Heart left ventricle (tissue), 16 donors: ENCODE measurements at regions of chr19 and their contacts with region 1.

Region 1: GRCh38 chr19:39532233-39533002 is at the start of gene EID2B:
- DNase-seq: peak; percentile 95 to 98 (median 97)
- ATAC-seq: peak; percentile 93 to 99 (median 98)
- H3K4me3 ChIP-seq: peak within 1 kb of the TSS; percentile 58 to 98 (median 80)
- H3K27ac ChIP-seq: peak within 1 kb of the TSS; percentile 45 to 92 (median 82)
- H3K4me1 ChIP-seq: peaks cover 0 to 22% (median 13%) of the 10 kb centered on the region in 12 donors
- H3K27me3 ChIP-seq: no peaks in the 10 kb centered on the region
- CTCF ChIP-seq: peak; percentile 96 to 99 (median 98)
- POLR2A ChIP-seq: peak in 1 of 2 donors; percentile 78
- total RNA-seq, gene EID2B: 1.1 to 5.1 (median 2.9) TPM

Region 2: DNA sequence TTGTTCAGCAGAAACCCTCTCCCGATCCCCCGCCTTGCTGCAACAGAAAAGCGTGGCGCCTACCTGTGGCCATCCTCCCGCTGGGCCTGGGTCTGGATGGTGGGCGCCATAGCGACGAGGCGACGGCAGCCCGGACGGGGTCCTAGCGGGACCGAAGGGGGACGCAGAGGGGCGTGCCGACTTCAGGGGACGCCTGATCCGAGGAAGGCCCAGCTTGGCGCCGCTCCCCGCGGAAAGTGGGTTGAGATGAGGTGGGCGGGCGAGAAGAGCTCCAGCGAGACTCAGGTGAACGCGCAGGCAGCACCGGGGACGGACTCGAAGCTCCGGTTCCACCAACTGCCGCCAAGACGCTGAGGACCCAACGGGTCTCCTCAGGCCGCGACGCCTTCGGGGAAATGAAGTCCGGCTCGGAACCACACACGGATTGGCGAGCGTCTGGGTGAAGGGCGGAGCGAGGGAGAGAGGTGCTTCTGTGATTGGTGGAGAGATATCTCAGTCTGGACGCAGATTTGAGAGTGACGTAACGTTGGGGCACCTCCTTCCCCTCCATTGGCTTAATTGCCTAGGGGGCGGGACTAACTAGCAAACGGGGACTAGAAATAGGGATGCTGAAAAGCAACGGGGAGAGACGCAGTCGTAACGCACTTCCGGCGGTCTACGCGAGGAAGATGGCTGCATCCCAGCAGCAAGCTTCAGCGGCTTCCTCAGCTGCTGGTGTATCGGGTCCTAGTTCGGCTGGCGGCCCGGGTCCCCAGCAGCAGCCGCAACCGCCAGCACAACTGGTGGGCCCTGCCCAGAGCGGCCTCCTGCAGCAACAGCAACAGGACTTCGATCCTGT is 141.4 kb before region 1 on chr19 and contains the starts of genes MED29 and PAF1:
- intact Hi-C with region 1: loop called in 5 of 10 experiments (anchors 2 to 10 kb)
- DNase-seq: peak; percentile 97 to 99 (median 98)
- ATAC-seq: peak; percentile 95 to 99 (median 96)
- H3K4me3 ChIP-seq: peak within 1 kb of the TSS; percentile 74 to 99 (median 94)
- H3K27ac ChIP-seq: peak within 1 kb of the TSS; percentile 94 to 100 (median 98)
- H3K4me1 ChIP-seq: peaks cover 3 to 25% (median 19%) of the 10 kb centered on the region in 12 donors
- H3K27me3 ChIP-seq: no peaks in the 10 kb centered on the region
- CTCF ChIP-seq: peak in 1 of 12 donors; percentile 26
- POLR2A ChIP-seq: peak; percentile 49 to 89
- total RNA-seq, gene MED29: 26.3 to 53.0 (median 34.1) TPM
- total RNA-seq, gene PAF1: 32.8 to 75.7 (median 40.7) TPM

Region 3: DNA sequence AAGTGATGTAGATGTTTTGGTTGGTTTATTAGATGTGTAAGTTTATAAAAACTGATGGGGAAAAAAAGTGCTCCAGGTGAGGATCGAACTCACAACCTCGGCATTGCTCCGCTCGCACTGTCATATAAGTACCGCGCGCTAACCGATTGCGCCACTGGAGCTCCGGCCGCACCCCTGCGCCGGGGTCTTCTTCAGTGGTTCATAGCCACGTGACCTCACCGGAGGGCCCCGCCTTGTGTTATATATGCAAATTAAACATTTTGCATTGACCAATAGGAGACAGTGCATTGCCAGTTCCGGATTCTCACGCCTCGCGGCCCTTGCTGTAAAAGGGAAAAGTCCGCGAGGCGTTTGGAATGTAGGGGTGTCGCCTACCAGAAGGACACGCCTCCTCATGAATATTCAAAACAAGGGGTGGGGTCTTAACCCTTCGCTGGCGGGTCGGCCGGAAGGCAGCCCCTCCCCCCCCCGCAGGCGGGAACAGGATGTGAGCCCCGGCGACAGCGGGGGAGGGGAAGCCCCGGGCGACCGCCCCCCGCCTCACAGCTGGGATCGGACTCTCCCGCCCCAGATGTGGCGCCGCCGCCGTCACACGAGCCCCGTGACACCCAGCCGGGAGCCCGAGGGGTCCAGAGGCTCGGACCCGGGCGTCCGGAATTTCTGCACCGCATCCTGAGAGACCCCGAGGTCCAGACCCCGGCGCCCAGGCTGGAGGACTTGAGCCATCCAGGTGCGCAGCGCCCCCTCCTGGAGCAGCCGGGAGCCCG is 120.1 kb before region 1 on chr19 and contains the start of gene PLEKHG2:
- intact Hi-C with region 1: loop called in 1 of 10 experiments (anchors 10 kb)
- DNase-seq: peak; percentile 97 to 98 (median 97)
- ATAC-seq: peak; percentile 65 to 72 (median 71)
- H3K4me3 ChIP-seq: peak within 1 kb of the TSS; percentile 61 to 100 (median 85)
- H3K27ac ChIP-seq: peak within 1 kb of the TSS; percentile 94 to 100 (median 99)
- H3K4me1 ChIP-seq: peaks cover 7 to 65% (median 37%) of the 10 kb centered on the region in 12 donors
- H3K27me3 ChIP-seq: peaks cover 0 to 5% (median 0%) of the 10 kb centered on the region in 9 donors
- CTCF ChIP-seq: peak; percentile 75 to 98 (median 89)
- POLR2A ChIP-seq: peak in 1 of 2 donors; percentile 80
- total RNA-seq, gene PLEKHG2: 9.2 to 38.5 (median 14.6) TPM

Region 4: DNA sequence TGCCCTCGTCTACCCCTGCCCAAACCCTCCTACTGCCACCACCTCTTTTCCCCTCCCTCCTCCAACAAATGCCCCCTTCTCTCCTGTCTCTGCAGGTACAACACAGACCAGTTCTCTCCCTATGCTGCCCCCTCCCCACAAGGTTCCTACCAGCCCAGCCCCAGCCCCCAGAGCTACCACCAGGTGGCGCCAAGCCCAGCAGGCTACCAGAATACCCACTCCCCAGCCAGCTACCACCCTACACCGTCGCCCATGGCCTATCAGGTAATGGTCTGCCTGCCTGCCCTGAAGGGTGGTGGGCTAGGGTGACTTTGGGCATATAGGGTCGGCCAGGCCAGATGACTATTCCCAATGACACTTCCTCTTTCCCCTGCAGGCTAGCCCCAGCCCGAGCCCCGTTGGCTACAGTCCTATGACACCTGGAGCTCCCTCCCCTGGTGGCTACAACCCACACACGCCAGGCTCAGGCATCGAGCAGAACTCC is 58.2 kb before region 1 on chr19:
- intact Hi-C with region 1: loop called (anchors 1 to 10 kb)
- DNase-seq: peak; percentile 44 to 77 (median 49)
- ATAC-seq: peak; percentile 34 to 71 (median 56)
- H3K4me3 ChIP-seq: no peak overlapping the region
- H3K27ac ChIP-seq: no peak overlapping the region
- H3K4me1 ChIP-seq: peaks cover 0 to 7% (median 0%) of the 10 kb centered on the region in 12 donors
- H3K27me3 ChIP-seq: no peaks in the 10 kb centered on the region
- CTCF ChIP-seq: peak; percentile 55 to 81 (median 75)
- POLR2A ChIP-seq: no peak

Region 5: GRCh38 chr19:39514840-39515550 is 17.4 kb before region 1 on chr19 and contains the start of gene SELENOV:
- intact Hi-C with region 1: no loop called
- DNase-seq: no peak
- ATAC-seq: peak in 2 of 4 donors; percentile 24 to 28
- H3K4me3 ChIP-seq: peak within 1 kb of the TSS; percentile 4 to 48 (median 32)
- H3K27ac ChIP-seq: no peak within 1 kb of the TSS
- H3K4me1 ChIP-seq: peaks cover 0 to 16% (median 11%) of the 10 kb centered on the region in 12 donors
- H3K27me3 ChIP-seq: peaks cover 21 to 73% (median 47%) of the 10 kb centered on the region in 9 donors
- CTCF ChIP-seq: peak in 1 of 12 donors; percentile 2
- POLR2A ChIP-seq: no peak
- total RNA-seq, gene SELENOV: not detected